ENCODE measurements at regions of chr22 and their contacts with region 1.

Region 1: DNA sequence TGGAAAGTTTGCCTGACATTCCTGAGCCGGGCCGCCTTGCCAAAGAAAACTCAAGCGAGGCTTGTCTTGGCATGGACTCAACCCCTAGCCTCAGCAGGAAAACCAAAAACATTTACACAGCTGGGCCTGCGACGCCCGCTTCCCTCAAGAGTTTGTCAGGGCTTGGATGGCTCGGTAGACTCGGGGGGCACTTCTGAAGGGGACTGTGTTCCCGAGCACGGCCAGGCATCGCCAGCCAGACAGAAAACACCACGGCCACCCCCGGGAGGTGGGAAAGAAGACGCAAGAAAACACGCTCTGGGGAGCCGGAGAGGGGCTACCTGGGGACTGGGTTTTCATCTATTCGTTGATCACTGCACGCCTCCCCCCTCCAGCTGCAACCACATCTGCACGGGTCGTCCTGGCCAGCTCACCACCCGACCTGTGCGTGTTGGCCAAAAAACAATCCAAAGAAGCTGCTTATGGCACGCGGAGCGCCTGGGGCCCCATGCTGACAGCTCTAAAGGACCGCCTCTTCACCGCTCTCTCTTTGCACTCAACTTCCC is 380.7 kb downstream of the MN1 start:
- DNase-seq: peak; percentile 95
- ATAC-seq: peak; percentile 76
- H3K4me3 ChIP-seq: no peak overlapping the region
- H3K27ac ChIP-seq: peak overlapping the region; percentile 62; the same call in 1 of the 2 replicates
- H3K4me1 ChIP-seq: peaks cover 18% of the 10 kb centered on the region
- H3K27me3 ChIP-seq: peaks cover 13% of the 10 kb centered on the region
- CTCF ChIP-seq: no peak
- POLR2A ChIP-seq: no peak
- RAD21 ChIP-seq: no peak; the same call in 1 of the 2 replicates

Region 2: DNA sequence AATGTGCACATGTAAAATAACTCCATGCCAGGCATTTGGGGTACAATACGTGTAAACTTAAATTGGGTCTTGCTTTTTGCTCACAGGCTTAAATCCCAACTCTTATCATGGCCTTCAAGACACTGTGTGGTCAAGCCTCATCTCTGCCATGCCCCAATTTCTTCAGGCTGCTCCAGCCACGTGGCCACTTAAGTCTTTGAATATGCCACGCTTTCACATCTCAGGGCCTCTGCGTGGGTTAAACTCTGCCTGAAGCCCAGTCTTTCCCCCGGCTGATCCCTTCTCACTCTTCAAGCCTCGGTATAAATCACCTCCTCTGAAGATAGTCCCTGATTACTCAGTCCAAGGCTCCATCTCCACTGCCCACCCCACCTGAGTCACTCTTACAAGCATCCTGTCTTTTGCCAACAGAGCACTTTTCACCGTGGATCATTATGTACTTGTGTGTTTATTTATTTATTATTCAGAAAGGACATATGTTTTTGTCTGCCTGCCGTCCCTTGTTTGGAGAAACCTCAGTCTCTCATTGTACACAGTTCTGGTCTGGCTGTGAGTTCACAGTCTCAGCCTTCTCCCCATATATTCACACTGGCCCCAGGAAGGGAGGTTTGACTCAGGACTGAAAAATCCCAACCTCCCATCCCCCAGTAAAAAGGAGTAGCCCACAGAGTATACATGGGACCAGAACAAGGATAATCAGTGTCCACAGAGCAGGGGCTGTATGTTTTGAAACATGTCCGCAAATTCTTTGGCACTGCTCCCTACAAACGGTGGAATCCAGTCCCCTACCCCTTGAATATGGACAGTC is 36.0 kb after region 1 on chr22:
- CTCF ChIA-PET with region 1: no interaction called
- POLR2A ChIA-PET with region 1: no interaction called
- dilution Hi-C with region 1: no loop called
- in situ Hi-C with region 1: no loop called
- intact Hi-C with region 1: loop called (anchors 5 kb)
- DNase-seq: peak; percentile 93
- ATAC-seq: peak; percentile 87
- H3K4me3 ChIP-seq: no peak overlapping the region
- H3K27ac ChIP-seq: peak overlapping the region; percentile 67
- H3K4me1 ChIP-seq: peaks cover 21% of the 10 kb centered on the region
- H3K27me3 ChIP-seq: no peaks in the 10 kb centered on the region
- CTCF ChIP-seq: no peak
- POLR2A ChIP-seq: no peak
- RAD21 ChIP-seq: peak; percentile 13

Region 3: DNA sequence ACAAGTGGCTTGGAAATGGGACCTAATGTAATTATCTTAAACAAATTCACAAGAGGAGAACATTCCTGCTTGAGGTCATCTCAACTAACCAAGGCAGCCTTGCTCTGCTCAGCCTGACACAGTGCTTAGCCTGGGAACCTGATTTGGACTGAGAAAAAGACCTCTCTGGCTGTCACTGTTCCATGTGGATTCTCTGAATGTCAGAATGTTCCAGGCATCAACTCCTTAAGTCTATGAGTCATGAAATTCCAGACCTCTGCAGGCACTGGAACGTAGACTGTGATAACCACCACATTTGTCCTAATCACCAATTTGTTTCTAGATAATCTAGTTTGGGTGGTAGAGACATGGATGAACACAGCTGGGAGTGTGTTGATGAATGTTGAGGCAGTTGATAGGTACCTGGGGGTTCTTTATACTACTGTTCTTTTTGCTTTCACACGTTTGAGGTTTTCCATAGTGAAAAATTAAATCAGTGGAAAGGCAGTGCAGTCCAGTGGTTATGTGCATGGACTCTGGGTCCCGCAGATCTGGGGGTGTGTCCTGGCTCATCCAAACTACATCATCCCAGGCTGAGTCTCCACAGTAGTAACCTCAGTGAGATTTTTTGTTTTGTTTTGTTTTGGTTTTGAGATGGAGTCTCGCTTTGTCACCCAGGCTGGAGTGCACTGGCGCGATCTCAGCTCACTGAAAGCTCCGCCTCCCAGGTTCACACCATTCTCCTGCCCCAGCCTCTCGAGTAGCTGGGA is 111.1 kb after region 1 on chr22:
- CTCF ChIA-PET with region 1: no interaction called
- POLR2A ChIA-PET with region 1: no interaction called
- dilution Hi-C with region 1: no loop called
- in situ Hi-C with region 1: no loop called
- intact Hi-C with region 1: loop called (anchors 10 kb)
- DNase-seq: peak; percentile 82
- ATAC-seq: peak; percentile 80
- H3K4me3 ChIP-seq: no peak overlapping the region
- H3K27ac ChIP-seq: no peak overlapping the region
- H3K4me1 ChIP-seq: peaks cover 6% of the 10 kb centered on the region
- H3K27me3 ChIP-seq: peaks cover 16% of the 10 kb centered on the region
- CTCF ChIP-seq: no peak
- POLR2A ChIP-seq: no peak
- RAD21 ChIP-seq: no peak

Region 4: GRCh38 chr22:27546157-27546935 is 125.5 kb after region 1 on chr22:
- CTCF ChIA-PET with region 1: no interaction called
- POLR2A ChIA-PET with region 1: no interaction called
- dilution Hi-C with region 1: no loop called
- in situ Hi-C with region 1: no loop called
- intact Hi-C with region 1: no loop called
- DNase-seq: no peak
- ATAC-seq: no peak
- H3K4me3 ChIP-seq: no peak overlapping the region
- H3K27ac ChIP-seq: no peak overlapping the region
- H3K4me1 ChIP-seq: no peaks in the 10 kb centered on the region
- H3K27me3 ChIP-seq: peaks cover 50% of the 10 kb centered on the region
- CTCF ChIP-seq: no peak
- POLR2A ChIP-seq: no peak
- RAD21 ChIP-seq: no peak